Mammary epithelial cell (primary cell): ENCODE measurements at regions of chr3 and their contacts with region 1.

Region 1: GRCh38 chr3:46970391-46971091 is 6.0 kb downstream of the CCDC12 start:
- DNase-seq: no peak
- H3K4me3 ChIP-seq: no peak overlapping the region
- H3K27ac ChIP-seq: no peak overlapping the region
- H3K4me1 ChIP-seq: peaks cover 22% of the 10 kb centered on the region
- H3K27me3 ChIP-seq: no peaks in the 10 kb centered on the region
- CTCF ChIP-seq: no peak

Region 2: DNA sequence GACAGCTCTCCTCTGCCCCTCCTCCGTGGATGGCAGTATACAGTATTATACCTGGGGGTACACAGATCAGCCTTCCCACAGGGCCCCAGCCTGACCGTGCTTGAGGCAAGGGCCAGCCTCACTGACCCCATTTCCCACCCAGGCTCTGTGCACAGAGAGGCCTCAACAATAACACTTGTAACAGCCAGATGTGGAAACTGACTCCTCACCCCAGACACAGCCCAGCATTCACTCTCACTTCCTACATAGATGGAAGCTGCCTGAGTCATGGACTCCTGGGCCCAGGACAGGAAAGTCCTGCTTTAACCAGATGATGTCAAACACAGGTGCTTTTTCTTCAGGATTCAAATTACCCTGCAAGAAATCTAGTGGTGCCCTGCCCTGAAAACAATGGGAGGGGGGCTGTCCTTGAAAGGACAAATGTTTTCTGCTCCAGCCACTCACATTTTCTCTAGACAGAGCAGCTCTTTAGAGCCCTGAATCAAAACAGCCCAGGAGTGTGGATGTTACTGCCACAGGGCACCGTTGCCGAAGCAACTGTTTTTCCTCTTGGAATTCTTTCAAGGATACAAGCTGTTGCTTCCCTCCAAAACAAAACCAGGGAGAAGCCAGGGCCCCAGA is 10.3 kb before region 1 on chr3:
- CTCF ChIA-PET with region 1: no interaction called
- dilution Hi-C with region 1: no loop called
- in situ Hi-C with region 1: no loop called
- intact Hi-C with region 1: loop called (anchors 1 kb)
- DNase-seq: peak; percentile 87
- H3K4me3 ChIP-seq: no peak overlapping the region
- H3K27ac ChIP-seq: peak overlapping the region; percentile 49
- H3K4me1 ChIP-seq: peaks cover 40% of the 10 kb centered on the region
- H3K27me3 ChIP-seq: no peaks in the 10 kb centered on the region
- CTCF ChIP-seq: no peak